ENCODE measurements at regions of chr4 and their contacts with region 1.

Region 1: GRCh38 chr4:118888666-118889311 is at the start of gene SYNPO2:
- DNase-seq: peak; percentile 63
- H3K4me3 Mint-ChIP-seq: peak within 1 kb of the TSS; percentile 67
- H3K27ac Mint-ChIP-seq: no peak within 1 kb of the TSS
- H3K4me1 Mint-ChIP-seq: peaks cover 14% of the 10 kb centered on the region
- H3K27me3 Mint-ChIP-seq: no peaks in the 10 kb centered on the region
- CTCF ChIP-seq: no peak
- total RNA-seq, gene SYNPO2: 0.42 and 0.61 TPM in 2 replicates

Region 2: GRCh38 chr4:118684873-118685811 is 203.6 kb before region 1 on chr4 and contains the start of gene METTL14:
- CTCF ChIA-PET with region 1: no interaction called
- POLR2A ChIA-PET with region 1: no interaction called
- intact Hi-C with region 1: loop called (anchors 10 kb)
- DNase-seq: peak; percentile 92
- H3K4me3 Mint-ChIP-seq: peak within 1 kb of the TSS; percentile 84
- H3K27ac Mint-ChIP-seq: peak within 1 kb of the TSS; percentile 82
- H3K4me1 Mint-ChIP-seq: peaks cover 14% of the 10 kb centered on the region
- H3K27me3 Mint-ChIP-seq: no peaks in the 10 kb centered on the region
- CTCF ChIP-seq: peak; percentile 11
- total RNA-seq, gene METTL14: 32.6 and 32.8 TPM in 2 replicates

Region 3: GRCh38 chr4:118740869-118741268 is 147.9 kb before region 1 on chr4:
- CTCF ChIA-PET with region 1: interaction called, 44 read pairs
- POLR2A ChIA-PET with region 1: interaction called, 3 read pairs
- intact Hi-C with region 1: loop called (anchors 1 kb)
- DNase-seq: peak; percentile 23
- H3K4me3 Mint-ChIP-seq: no peak overlapping the region
- H3K27ac Mint-ChIP-seq: no peak overlapping the region
- H3K4me1 Mint-ChIP-seq: no peaks in the 10 kb centered on the region
- H3K27me3 Mint-ChIP-seq: no peaks in the 10 kb centered on the region
- CTCF ChIP-seq: peak; percentile 19

Region 4: DNA sequence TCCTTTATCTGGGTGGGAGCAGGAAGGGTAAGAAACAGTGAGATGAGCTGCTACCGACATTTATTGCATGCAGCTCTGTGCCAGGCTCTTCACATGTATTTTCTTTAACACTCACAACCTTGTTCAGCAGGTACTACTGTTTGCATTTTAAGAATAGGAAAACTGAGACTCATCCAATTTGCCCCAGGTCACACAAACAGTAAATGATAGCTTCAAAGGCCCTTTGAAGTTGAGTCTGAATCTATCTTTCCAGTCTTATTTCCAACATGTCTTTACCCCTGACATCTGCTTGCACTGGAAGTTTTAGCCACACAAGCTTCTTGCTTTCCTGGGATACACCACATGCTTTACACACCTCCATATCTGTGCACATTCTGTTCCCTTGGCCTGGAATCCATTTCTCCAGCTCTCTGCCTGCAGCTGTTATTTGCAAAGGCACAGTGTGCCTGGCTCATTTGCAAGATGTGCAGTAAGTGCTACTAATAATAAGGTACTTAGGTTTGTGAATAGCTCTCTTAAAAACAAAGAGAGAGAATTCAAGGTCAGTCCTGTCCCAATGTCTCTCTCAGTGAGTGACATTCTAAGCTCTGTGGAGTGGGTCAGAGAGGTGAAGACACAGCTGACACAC is 142.4 kb before region 1 on chr4:
- CTCF ChIA-PET with region 1: interaction called, 44 read pairs
- POLR2A ChIA-PET with region 1: interaction called, 3 read pairs
- intact Hi-C with region 1: loop called (anchors 1 kb)
- DNase-seq: no peak
- H3K4me3 Mint-ChIP-seq: no peak overlapping the region
- H3K27ac Mint-ChIP-seq: no peak overlapping the region
- H3K4me1 Mint-ChIP-seq: no peaks in the 10 kb centered on the region
- H3K27me3 Mint-ChIP-seq: no peaks in the 10 kb centered on the region
- CTCF ChIP-seq: no peak

Region 5: DNA sequence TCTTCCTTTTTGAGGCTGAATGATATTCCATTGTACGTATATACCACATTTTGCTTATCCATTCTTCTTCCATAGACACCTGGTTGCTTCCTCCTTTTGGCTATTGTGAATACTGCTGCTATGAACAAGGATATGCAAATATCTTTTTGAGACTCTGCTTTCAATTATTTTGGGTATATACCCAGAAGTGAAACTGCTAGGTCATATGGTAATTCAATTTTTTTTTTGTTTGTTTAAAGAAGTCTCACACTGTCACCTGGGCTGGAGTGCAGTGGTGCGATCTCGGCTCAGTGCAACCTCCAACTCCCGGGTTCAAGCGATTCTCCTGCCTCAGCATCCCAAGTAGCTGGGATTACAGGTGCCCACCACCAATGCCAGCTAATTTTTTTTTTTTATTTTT is 128.3 kb before region 1 on chr4:
- CTCF ChIA-PET with region 1: interaction called, 121 read pairs
- POLR2A ChIA-PET with region 1: no interaction called
- intact Hi-C with region 1: no loop called
- DNase-seq: no peak
- H3K4me3 Mint-ChIP-seq: no peak overlapping the region
- H3K27ac Mint-ChIP-seq: no peak overlapping the region
- H3K4me1 Mint-ChIP-seq: peaks cover 20% of the 10 kb centered on the region
- H3K27me3 Mint-ChIP-seq: no peaks in the 10 kb centered on the region
- CTCF ChIP-seq: no peak

Region 6: GRCh38 chr4:118968005-118968404 is 79.2 kb after region 1 on chr4:
- CTCF ChIA-PET with region 1: interaction called, 23 read pairs
- POLR2A ChIA-PET with region 1: interaction called, 5 read pairs
- intact Hi-C with region 1: loop called (anchors 1 kb)
- DNase-seq: peak; percentile 60
- H3K4me3 Mint-ChIP-seq: no peak overlapping the region
- H3K27ac Mint-ChIP-seq: peak overlapping the region; percentile 74
- H3K4me1 Mint-ChIP-seq: peaks cover 15% of the 10 kb centered on the region
- H3K27me3 Mint-ChIP-seq: no peaks in the 10 kb centered on the region
- CTCF ChIP-seq: no peak